ENCODE measurements at regions of chr7 and their contacts with region 1.

Region 1: DNA sequence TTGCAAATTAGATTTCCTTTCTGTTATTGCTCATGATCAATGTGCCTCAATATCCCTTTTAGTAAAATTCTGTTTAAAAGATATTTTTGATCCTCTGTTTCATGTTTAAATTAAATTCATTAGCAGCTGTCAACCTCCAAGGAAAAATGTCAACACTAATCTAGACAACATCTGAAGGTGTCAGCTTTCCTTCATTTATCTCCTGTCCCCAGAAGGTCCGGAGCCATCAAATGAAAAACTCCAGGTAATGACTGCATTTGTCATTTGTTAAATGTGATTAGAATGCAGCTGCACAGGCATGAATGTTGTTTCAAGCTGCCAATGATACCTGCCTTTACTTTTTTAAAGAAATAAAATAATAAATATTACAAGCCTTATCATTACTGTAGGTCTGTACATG is 463.7 kb upstream of the SEMA3A start:
- DNase-seq: no peak
- CTCF ChIP-seq: no peak

Region 2: DNA sequence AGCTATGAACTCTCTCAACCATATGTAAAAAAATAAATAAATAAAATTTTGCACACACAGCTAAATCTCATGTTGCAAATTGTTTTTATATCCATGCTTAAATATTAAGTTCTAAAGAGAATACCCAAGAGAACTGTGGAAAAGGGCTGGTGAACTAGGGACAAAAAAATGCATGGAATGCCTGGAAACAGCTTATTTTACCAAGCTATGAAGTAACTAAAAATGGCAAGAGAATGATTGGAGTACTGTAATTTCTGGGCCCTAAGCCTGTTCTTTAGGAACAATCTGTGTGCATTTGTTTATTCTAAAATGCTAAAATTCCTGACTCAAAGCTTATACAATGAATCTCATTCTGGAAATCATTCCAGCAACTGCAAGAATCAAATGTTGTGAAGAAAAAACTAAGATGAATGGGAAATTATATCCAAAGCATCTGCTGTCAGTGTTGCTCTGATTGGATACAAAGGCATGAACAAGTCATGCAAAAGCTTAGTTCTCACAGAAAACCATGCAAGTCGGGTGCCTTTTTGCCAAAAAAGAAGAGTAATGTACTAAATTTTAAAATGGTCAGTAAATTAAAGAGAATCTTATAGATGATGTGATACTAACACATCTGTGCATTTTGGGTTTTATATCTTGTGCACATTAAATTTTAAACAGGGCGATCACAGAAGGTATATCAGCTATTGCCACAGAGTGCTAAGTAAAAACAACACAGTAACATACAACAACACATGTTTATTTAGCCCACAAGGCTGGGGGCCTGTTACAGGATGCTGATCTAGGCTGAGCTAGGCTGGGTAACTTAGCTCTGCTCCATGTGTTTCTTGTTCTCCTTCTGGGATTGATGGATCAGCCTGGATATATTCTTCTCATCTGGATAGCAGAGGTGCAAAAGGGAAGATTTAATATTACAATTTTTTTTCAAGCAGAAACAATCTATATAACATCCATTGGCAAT is 10.2 kb before region 1 on chr7:
- CTCF ChIA-PET with region 1: interaction called, 10 read pairs
- POLR2A ChIA-PET with region 1: interaction called, 3 read pairs
- DNase-seq: no peak
- CTCF ChIP-seq: no peak